OCI-LY7 (cell line): ENCODE measurements at regions of chr6 and their contacts with region 1.

Region 1: DNA sequence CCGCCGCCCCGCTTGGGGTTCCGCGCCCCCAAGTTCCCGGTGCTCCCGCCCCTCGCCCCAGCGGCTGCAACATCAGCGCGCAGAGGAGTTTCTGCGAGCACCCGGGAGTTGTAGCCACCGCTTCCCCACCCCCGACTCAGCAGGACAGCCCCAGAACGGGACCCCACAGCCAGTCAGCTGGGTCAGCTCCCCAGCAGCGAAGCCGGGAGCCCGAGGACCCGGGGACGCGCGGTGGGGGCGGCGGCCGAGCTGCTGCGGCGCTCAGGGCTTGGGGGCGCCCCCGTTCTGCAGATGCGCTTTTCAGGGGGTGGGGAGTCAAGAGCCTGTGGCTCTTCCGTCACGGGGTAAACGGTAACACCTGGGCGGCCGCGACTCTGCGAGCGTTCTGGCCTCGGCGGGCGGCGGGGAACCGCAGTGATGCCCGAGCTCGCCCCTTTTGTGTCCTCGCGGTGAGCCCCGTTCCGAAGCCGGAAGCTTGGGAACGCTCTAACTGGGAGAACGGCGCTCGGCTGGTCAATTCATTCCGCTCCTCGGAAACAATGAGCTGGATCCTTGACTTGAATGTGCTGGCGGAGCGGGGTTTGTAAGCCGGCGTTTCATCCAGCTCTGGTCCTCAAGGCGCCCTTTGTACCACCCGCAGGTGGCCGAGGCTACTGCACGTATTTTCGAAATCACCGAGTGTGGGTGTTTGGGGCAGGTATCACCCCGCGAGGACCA is 774 bp downstream of the PLEKHG1 start:
- DNase-seq: peak; percentile 92
- H3K4me3 ChIP-seq: peak overlapping the region; percentile 78
- H3K27ac ChIP-seq: peak overlapping the region; percentile 69
- H3K4me1 ChIP-seq: peaks cover 44% of the 10 kb centered on the region
- CTCF ChIP-seq: peak; percentile 74

Region 2: GRCh38 chr6:150417899-150418826 is 182.3 kb before region 1 on chr6:
- CTCF ChIA-PET with region 1: interaction called, 3 read pairs
- POLR2A ChIA-PET with region 1: interaction called, 4 read pairs
- intact Hi-C with region 1: loop called (anchors 1 kb)
- DNase-seq: peak; percentile 91
- H3K4me3 ChIP-seq: peak overlapping the region; percentile 3
- H3K27ac ChIP-seq: peak overlapping the region; percentile 9
- H3K4me1 ChIP-seq: peaks cover 14% of the 10 kb centered on the region
- CTCF ChIP-seq: peak; percentile 98

Region 3: GRCh38 chr6:150435832-150436231 is 164.6 kb before region 1 on chr6:
- CTCF ChIA-PET with region 1: no interaction called
- POLR2A ChIA-PET with region 1: no interaction called
- intact Hi-C with region 1: no loop called
- DNase-seq: no peak
- H3K4me3 ChIP-seq: no peak overlapping the region
- H3K27ac ChIP-seq: no peak overlapping the region
- H3K4me1 ChIP-seq: no peaks in the 10 kb centered on the region
- CTCF ChIP-seq: no peak

Region 4: GRCh38 chr6:150456456-150456855 is 144.0 kb before region 1 on chr6:
- CTCF ChIA-PET with region 1: no interaction called
- POLR2A ChIA-PET with region 1: no interaction called
- intact Hi-C with region 1: no loop called
- DNase-seq: no peak
- H3K4me3 ChIP-seq: no peak overlapping the region
- H3K27ac ChIP-seq: no peak overlapping the region
- H3K4me1 ChIP-seq: no peaks in the 10 kb centered on the region
- CTCF ChIP-seq: no peak

Region 5: GRCh38 chr6:150617496-150618460 is 17.3 kb after region 1 on chr6:
- CTCF ChIA-PET with region 1: interaction called, 4 read pairs
- POLR2A ChIA-PET with region 1: interaction called, 23 read pairs
- intact Hi-C with region 1: no loop called
- DNase-seq: no peak
- H3K4me3 ChIP-seq: no peak overlapping the region
- H3K27ac ChIP-seq: no peak overlapping the region
- H3K4me1 ChIP-seq: peaks cover 68% of the 10 kb centered on the region
- CTCF ChIP-seq: no peak

Region 6: GRCh38 chr6:150634176-150634963 is 33.9 kb after region 1 on chr6:
- CTCF ChIA-PET with region 1: interaction called, 4 read pairs
- POLR2A ChIA-PET with region 1: interaction called, 7 read pairs
- intact Hi-C with region 1: loop called (anchors 2 kb)
- DNase-seq: peak; percentile 47
- H3K4me3 ChIP-seq: peak overlapping the region; percentile 41
- H3K27ac ChIP-seq: peak overlapping the region; percentile 38
- H3K4me1 ChIP-seq: peaks cover 79% of the 10 kb centered on the region
- CTCF ChIP-seq: no peak

Region 7: GRCh38 chr6:150741633-150742504 is 141.4 kb after region 1 on chr6:
- CTCF ChIA-PET with region 1: interaction called, 11 read pairs
- POLR2A ChIA-PET with region 1: no interaction called
- intact Hi-C with region 1: no loop called
- DNase-seq: peak; percentile 68
- H3K4me3 ChIP-seq: no peak overlapping the region
- H3K27ac ChIP-seq: no peak overlapping the region
- H3K4me1 ChIP-seq: peaks cover 4% of the 10 kb centered on the region
- CTCF ChIP-seq: peak; percentile 87

Region 8: DNA sequence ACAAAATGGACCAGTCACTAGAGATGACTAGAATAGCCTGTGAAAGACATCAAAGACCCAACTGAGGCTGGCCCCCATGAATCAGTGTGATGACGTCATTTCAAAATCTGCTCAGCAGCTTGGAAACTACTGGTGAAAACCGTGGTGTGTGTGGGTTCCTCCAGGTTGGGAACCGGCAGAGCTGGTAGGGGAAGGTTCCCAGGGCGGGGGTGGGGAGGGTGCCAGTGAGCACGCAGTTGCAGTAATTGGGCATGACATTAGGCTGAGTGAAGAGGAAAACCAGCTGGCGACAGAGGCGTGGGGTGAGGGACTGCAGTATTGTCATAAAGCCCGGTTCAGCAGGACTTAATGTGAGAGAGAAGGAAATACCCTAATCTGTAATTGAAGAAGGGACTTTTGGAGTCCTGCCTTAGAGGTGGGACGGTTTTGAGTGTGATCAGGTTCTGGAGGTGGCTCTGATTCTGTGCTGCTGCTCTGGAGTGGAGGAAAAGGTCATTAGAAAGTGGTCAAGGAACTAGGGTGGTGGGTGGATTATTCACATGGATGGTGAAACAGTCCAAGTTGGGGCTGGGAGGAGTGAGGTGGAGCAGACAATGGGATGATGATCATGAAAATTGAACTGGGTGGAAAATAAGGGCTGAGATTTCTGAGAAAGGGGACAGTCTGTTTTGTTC is 213.0 kb after region 1 on chr6:
- CTCF ChIA-PET with region 1: interaction called, 4 read pairs
- POLR2A ChIA-PET with region 1: interaction called, 4 read pairs
- intact Hi-C with region 1: loop called (anchors 1 kb)
- DNase-seq: no peak
- H3K4me3 ChIP-seq: no peak overlapping the region
- H3K27ac ChIP-seq: no peak overlapping the region
- H3K4me1 ChIP-seq: peaks cover 8% of the 10 kb centered on the region
- CTCF ChIP-seq: no peak

Region 9: GRCh38 chr6:150865406-150866146 is 265.1 kb after region 1 on chr6 and contains the start of gene MTHFD1L:
- CTCF ChIA-PET with region 1: no interaction called
- POLR2A ChIA-PET with region 1: no interaction called
- intact Hi-C with region 1: loop called (anchors 10 kb)
- DNase-seq: peak; percentile 91
- H3K4me3 ChIP-seq: peak within 1 kb of the TSS; percentile 96
- H3K27ac ChIP-seq: peak within 1 kb of the TSS; percentile 61
- H3K4me1 ChIP-seq: peaks cover 14% of the 10 kb centered on the region
- CTCF ChIP-seq: peak; percentile 75
- total RNA-seq, gene MTHFD1L: 59.6 and 68.4 TPM in 2 replicates